ENCODE measurements at regions of chr4 and their contacts with region 1.

Region 1: GRCh38 chr4:6327041-6327917 is 57.6 kb downstream of the WFS1 start:
- DNase-seq: peak; percentile 67 to 82
- H3K4me3 ChIP-seq: no peak overlapping the region
- H3K27ac ChIP-seq: no peak overlapping the region
- H3K4me1 ChIP-seq: peaks cover 0 to 6% (median 0%) of the 10 kb centered on the region in 4 donors
- H3K27me3 ChIP-seq: peaks cover 0 to 44% of the 10 kb centered on the region in 2 donors
- CTCF ChIP-seq: peak; percentile 96 to 98

Region 2: DNA sequence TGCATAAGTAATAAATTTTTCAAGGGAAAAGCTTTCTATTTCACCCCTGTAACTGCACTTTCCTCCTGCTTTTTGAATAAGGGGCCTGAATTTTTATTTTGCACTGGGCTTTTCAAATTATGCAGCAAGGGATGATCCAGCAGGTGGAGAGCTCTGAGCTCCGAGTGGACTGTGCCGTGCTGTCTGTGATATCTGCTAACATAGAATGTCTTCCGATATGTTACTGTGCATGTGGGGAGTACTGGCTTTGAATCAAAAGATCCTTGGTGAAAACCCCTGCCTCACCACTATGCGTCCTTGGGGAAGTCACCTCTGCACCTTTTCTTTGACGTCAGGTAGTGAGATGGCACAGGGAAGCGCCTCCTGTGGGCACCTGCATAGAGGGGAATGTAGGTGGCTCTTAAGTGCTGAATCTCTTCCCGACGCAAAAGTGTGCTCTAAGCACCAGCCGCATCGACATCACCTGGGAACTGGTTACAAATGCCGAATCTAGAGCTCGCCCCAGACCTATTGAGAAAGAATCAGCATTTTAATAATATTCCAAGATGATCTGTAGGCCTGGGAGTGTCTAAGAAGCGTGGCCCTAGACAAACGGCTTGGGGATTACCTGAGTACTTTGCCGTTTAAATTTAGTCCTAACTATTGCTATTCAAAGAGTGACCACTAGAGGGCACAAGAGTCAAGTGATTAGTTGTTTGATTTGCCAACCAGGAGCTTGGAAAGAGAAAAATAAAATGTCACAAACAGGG is 76.9 kb before region 1 on chr4:
- intact Hi-C with region 1: loop called (anchors 1 kb)
- DNase-seq: no peak
- H3K4me3 ChIP-seq: no peak overlapping the region
- H3K27ac ChIP-seq: no peak overlapping the region
- H3K4me1 ChIP-seq: peaks cover 0 to 4% (median 0%) of the 10 kb centered on the region in 4 donors
- H3K27me3 ChIP-seq: peaks cover 0 to 50% of the 10 kb centered on the region in 2 donors
- CTCF ChIP-seq: peak; percentile 75 to 88

Region 3: GRCh38 chr4:6259886-6260285 is 67.4 kb before region 1 on chr4:
- intact Hi-C with region 1: loop called (anchors 2 kb)
- DNase-seq: no peak
- H3K4me3 ChIP-seq: no peak overlapping the region
- H3K27ac ChIP-seq: no peak overlapping the region
- H3K4me1 ChIP-seq: no peaks in the 10 kb centered on the region
- H3K27me3 ChIP-seq: peaks cover 0 to 44% of the 10 kb centered on the region in 2 donors
- CTCF ChIP-seq: no peak